H1 (cell line): ENCODE measurements at regions of chr2 and their contacts with region 1.

Region 1: DNA sequence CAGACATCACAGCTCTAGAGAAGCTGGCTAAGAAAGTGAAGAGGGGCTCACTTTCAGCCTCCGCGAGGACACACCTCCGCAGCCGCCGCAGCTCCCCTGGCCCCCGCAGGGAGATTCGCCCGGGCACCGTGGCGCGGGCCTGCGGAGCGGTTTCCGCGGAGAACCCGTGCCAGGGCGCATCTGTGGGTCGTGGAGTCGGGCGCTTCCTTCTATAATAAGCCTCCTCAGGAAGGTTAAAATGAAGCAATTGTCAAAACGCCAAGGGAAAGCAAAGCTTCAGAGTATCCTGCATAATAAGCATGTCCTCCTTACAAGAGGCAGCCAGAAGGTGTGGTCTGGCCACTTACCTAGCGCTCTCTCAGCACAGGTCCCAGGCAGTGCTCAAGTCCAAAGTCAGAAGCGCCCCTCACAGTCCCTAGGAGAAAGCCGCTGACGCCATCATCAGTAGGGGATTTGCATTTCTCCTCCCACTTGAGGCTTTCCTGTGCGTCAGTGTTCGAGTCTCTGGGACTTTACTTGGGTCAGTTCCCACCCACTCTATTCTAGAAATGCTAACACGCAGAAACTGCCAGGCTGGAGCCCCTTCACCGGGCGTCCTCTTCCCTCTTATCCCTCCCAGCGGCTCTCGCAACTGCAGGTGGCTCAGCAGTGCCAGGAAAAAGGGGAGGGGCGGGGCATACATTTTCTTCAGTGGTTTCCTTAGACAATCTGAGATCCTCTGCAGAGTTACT is at the start of gene STAT4:
- DNase-seq: peak; percentile 25 to 70
- H3K4me3 ChIP-seq: peak within 1 kb of the TSS; percentile 57 to 71 (median 63)
- H3K27ac ChIP-seq: no peak within 1 kb of the TSS
- H3K4me1 ChIP-seq: peaks cover 0 to 4% (median 2%) of the 10 kb centered on the region in 4 experiments; a peak in 4 of 7 replicates
- H3K27me3 ChIP-seq: peaks cover 0 to 7% (median 4%) of the 10 kb centered on the region in 4 experiments; a peak in 2 of 7 replicates
- CTCF ChIP-seq: no peak
- EP300 ChIP-seq: no peak
- POLR2A ChIP-seq: 0 out of 3 replicates have a peak, but pooled peaks of 1 of the 2 experiments have one; percentile 48
- RAD21 ChIP-seq: no peak
- total RNA-seq, gene STAT4: 0.63 and 0.80 TPM in 2 replicates

Region 2: GRCh38 chr2:191064590-191064989 is 86.2 kb before region 1 on chr2:
- CTCF ChIA-PET with region 1: interaction called, 13 read pairs
- POLR2A ChIA-PET with region 1: no interaction called
- DNase-seq: no peak
- H3K4me3 ChIP-seq: no peak overlapping the region
- H3K27ac ChIP-seq: no peak overlapping the region
- H3K4me1 ChIP-seq: no peaks in the 10 kb centered on the region; a peak in 1 of 7 replicates
- H3K27me3 ChIP-seq: no peaks in the 10 kb centered on the region
- CTCF ChIP-seq: no peak
- EP300 ChIP-seq: no peak
- POLR2A ChIP-seq: no peak
- RAD21 ChIP-seq: no peak

Region 3: GRCh38 chr2:191109888-191110287 is 40.9 kb before region 1 on chr2:
- CTCF ChIA-PET with region 1: interaction called, 13 read pairs
- POLR2A ChIA-PET with region 1: no interaction called
- DNase-seq: no peak
- H3K4me3 ChIP-seq: no peak overlapping the region
- H3K27ac ChIP-seq: no peak overlapping the region
- H3K4me1 ChIP-seq: no peaks in the 10 kb centered on the region
- H3K27me3 ChIP-seq: no peaks in the 10 kb centered on the region
- CTCF ChIP-seq: no peak
- EP300 ChIP-seq: no peak
- POLR2A ChIP-seq: no peak
- RAD21 ChIP-seq: no peak

Region 4: DNA sequence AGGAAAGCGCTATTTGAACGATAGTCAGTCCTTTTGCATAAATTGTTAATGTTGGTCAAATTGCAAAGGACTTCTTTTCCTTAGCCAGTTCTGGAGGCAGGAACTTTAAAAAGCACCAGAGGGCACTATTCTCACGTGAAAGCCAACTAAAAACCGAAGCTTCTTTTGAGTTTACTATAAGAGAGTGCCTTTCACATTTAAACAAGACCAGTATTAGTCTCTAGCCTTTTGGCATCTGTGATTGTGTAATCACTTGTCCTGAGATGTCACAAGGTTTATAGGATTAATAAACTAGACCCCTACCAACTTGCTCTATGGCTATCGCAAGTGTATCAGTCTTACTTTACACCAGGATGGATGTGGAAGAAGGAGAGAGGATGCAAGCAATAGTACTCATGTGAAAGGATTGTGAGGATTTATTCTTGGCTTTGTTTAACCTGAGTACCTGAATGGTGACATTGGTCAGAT is 14.4 kb after region 1 on chr2:
- CTCF ChIA-PET with region 1: interaction called, 39 read pairs
- POLR2A ChIA-PET with region 1: no interaction called
- DNase-seq: no peak
- H3K4me3 ChIP-seq: no peak overlapping the region
- H3K27ac ChIP-seq: no peak overlapping the region
- H3K4me1 ChIP-seq: no peaks in the 10 kb centered on the region
- H3K27me3 ChIP-seq: no peaks in the 10 kb centered on the region
- CTCF ChIP-seq: peak in 2 of 3 experiments; percentile 60; a peak in 3 of 4 replicates
- EP300 ChIP-seq: no peak
- POLR2A ChIP-seq: no peak
- RAD21 ChIP-seq: peak; percentile 85 to 87

Region 5: DNA sequence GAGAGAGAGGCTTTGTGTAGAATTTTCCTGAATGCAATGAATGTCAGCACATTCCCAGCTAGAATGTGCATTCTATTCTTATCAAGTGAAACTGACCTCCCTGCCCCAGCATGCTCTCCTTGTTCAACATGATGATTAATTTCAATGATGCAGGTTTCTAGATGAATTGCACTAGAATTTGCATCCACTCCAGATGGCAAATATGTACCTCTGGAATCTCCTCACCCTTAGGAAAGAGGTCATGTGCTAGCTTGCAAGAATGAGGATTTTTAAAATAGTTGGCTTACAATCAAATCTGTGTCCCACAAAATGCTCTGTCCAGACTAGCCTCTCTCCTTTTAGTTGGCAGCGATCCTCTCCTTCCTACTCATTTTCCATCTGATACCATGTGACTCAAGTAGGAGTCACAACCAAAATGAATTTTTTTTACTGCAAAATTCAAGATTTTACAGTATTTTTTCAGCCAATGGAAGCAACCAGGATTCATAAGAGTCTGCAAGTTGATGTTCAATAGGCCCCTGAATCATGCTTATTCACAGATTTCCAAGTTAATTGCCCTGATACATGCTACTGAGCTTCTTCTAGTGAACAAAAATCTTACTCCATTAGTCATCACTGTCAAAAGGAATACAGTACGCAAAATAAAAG is 21.1 kb after region 1 on chr2:
- CTCF ChIA-PET with region 1: interaction called, 39 read pairs
- POLR2A ChIA-PET with region 1: interaction called, 3 read pairs
- DNase-seq: no peak
- H3K4me3 ChIP-seq: no peak overlapping the region
- H3K27ac ChIP-seq: no peak overlapping the region
- H3K4me1 ChIP-seq: peaks cover 0 to 3% (median 0%) of the 10 kb centered on the region in 4 experiments; a peak in 1 of 7 replicates
- H3K27me3 ChIP-seq: no peaks in the 10 kb centered on the region
- CTCF ChIP-seq: no peak
- EP300 ChIP-seq: no peak
- POLR2A ChIP-seq: no peak
- RAD21 ChIP-seq: no peak

Region 6: GRCh38 chr2:191218292-191218898 is 67.6 kb after region 1 on chr2:
- CTCF ChIA-PET with region 1: interaction called, 11 read pairs
- POLR2A ChIA-PET with region 1: no interaction called
- DNase-seq: peak; percentile 57 to 73
- H3K4me3 ChIP-seq: no peak overlapping the region
- H3K27ac ChIP-seq: no peak overlapping the region
- H3K4me1 ChIP-seq: peaks cover 0 to 3% (median 0%) of the 10 kb centered on the region in 4 experiments; a peak in 1 of 7 replicates
- H3K27me3 ChIP-seq: no peaks in the 10 kb centered on the region
- CTCF ChIP-seq: peak; percentile 37 to 85 (median 70)
- EP300 ChIP-seq: no peak
- POLR2A ChIP-seq: no peak
- RAD21 ChIP-seq: peak; percentile 83 to 86